Ascending aorta (tissue), 2 donors: ENCODE measurements at regions of chr11 and their contacts with region 1.

Region 1: DNA sequence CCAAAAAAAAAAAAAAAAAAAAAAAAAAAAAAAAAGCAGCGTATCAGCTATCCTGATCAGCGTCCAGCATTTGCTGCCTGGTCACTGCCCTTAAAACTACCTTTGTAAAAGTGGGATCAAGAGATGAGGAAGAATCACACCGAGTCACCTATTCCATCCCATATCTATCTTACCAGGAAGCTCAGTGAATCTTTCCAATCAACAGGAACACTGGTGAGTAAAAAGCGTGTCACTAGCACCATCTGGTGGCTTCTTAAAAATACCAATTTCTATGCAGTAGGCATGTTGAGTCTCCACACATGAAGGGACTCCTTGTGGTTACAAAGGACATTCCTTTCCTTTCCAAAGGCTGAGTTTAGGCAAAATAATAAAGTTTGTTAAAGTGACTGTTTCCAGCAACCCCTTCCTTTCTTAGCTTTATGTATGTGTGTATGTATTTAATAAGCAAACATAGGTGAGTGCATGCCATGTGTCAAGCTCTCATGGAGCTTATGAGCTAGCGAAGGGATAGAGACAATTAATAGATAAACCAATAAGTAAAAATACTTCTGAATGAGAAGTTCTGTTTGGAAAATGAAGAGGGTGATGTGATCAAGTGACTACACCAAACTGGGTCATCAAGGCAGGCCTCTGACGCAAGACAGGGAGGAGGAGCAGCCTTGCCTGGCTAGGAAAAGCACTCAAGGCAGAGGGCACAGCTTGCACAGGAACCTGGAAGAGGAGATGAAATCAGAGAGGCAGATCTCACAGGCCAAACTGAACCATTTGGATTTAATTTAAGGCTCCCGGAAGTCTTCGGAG is 13.9 kb upstream of the TP53AIP1 start:
- DNase-seq: no peak
- H3K4me3 ChIP-seq: no peak overlapping the region
- H3K27ac ChIP-seq: no peak overlapping the region
- H3K4me1 ChIP-seq: no peaks in the 10 kb centered on the region
- H3K27me3 ChIP-seq: no peaks in the 10 kb centered on the region
- CTCF ChIP-seq: peak; percentile 54 to 74 (median 64)

Region 2: GRCh38 chr11:128848815-128849455 is 107.7 kb before region 1 on chr11:
- intact Hi-C with region 1: no loop called
- DNase-seq: no peak
- H3K4me3 ChIP-seq: no peak overlapping the region
- H3K27ac ChIP-seq: no peak overlapping the region
- H3K4me1 ChIP-seq: no peaks in the 10 kb centered on the region
- H3K27me3 ChIP-seq: no peaks in the 10 kb centered on the region
- CTCF ChIP-seq: peak; percentile 8 to 47 (median 39)

Region 3: DNA sequence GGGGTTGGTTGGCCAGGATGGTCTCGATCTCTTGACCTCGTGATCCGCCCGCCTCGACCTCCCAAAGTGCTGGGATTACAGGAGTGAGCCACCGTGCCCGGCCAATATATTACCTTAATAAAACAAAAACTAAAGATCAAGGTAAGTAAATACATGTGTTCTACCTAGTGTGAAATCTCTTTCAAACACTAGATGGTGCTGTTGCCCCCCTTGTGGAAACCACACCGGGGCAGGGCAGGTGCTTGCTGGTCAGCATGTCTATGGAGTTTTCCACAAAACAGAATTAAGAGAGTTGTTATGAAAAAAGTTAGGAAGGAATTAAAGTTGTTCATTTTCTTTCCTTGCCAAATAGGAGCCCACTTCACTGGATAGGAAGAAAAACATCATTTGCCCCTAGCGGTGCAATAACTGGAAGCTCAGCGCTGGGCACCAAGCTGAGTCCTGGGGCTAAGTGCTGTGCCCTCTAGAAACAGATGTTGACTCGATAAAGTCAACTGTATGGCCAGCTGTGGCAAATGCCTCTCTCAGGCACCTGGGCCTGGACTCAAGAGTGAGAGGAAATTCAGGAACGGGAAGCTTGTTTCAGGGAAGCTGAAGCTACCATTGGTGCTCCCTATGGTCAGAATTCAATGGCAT is 71.8 kb before region 1 on chr11:
- intact Hi-C with region 1: loop called (anchors 1 kb)
- DNase-seq: no peak
- H3K4me3 ChIP-seq: no peak overlapping the region
- H3K27ac ChIP-seq: no peak overlapping the region
- H3K4me1 ChIP-seq: no peaks in the 10 kb centered on the region
- H3K27me3 ChIP-seq: no peaks in the 10 kb centered on the region
- CTCF ChIP-seq: peak; percentile 84 to 89 (median 84)

Region 4: DNA sequence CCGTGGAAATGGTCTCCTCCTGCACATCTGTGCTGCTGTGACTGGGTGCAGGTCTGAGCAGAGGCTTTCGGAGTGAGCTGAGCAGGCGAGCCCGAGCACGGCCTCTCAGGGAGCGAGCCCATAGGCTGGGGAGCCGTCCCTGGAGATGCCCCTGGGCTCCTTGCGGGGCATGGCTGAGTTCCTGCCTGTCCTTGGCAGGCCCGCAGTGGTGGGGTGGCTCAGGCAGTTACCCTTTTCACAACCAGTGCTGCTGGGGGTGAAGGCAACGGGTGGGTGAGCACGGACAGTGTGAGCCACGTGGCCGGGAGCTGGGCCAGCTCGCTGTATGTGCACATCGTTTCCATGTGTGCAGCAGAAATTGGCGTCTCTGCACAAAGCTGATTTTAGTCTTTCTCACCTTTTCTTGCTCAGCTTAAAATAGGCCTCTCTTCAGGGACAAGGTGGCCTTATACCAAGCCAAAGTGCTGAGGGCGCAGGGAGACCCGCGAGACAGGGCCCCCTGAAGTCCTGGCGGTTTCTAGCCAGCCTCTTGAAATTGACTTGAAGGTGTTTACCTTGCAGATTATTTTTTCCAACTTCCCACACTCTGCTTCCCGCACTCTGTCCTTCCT is 13.7 kb before region 1 on chr11 and contains the start of gene TP53AIP1:
- intact Hi-C with region 1: no loop called
- DNase-seq: no peak
- H3K4me3 ChIP-seq: no peak within 1 kb of the TSS
- H3K27ac ChIP-seq: no peak within 1 kb of the TSS
- H3K4me1 ChIP-seq: no peaks in the 10 kb centered on the region
- H3K27me3 ChIP-seq: no peaks in the 10 kb centered on the region
- CTCF ChIP-seq: no peak
- total RNA-seq, gene TP53AIP1: not detected

Region 5: DNA sequence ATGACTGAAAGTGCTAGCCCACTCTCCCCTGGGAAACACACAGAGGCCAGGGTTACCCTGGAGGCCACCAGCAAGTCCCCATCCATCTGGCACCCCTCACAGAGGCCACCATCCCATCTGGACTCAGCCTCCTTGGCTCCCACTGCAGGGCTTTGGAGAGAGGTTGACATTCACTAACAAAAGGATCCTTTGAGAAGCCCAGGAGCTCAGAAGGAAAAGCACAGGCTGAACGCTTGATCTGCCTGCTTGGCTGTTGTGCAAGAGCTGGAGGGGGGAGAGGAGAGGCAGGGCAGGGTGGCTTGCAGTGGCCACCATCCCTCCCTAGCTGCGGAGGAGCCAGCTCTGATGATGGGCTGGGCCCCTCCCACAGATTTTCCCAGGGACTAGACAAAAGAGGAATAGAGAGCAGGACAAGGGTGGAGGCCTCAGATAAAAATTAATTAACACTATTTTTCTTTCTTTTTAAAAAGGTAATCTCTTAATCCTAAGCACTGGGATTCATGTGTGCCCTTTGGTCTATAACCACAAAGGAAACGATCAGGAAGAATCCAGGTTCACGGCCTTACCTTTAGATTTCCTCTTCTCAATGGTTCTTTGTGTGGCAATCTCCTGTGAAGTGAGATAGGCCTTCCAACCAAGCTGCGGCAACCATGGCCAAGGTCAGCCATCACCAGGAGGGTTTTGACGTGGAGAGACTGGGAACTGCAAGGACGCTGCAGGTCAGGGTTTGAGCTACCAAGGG is 573.7 kb after region 1 on chr11:
- intact Hi-C with region 1: no loop called
- DNase-seq: no peak
- H3K4me3 ChIP-seq: no peak overlapping the region
- H3K27ac ChIP-seq: no peak overlapping the region
- H3K4me1 ChIP-seq: no peaks in the 10 kb centered on the region
- H3K27me3 ChIP-seq: no peaks in the 10 kb centered on the region
- CTCF ChIP-seq: no peak